ENCODE measurements at regions of chr11 and their contacts with region 1.

Region 1: GRCh38 chr11:75142714-75143419 is 8.0 kb upstream of the SLCO2B1 start:
- DNase-seq: no peak
- H3K4me3 ChIP-seq: no peak overlapping the region
- H3K27ac ChIP-seq: no peak overlapping the region
- H3K4me1 ChIP-seq: peaks cover 11% of the 10 kb centered on the region
- H3K27me3 ChIP-seq: no peaks in the 10 kb centered on the region
- CTCF ChIP-seq: no peak
- POLR2A ChIP-seq: no peak

Region 2: DNA sequence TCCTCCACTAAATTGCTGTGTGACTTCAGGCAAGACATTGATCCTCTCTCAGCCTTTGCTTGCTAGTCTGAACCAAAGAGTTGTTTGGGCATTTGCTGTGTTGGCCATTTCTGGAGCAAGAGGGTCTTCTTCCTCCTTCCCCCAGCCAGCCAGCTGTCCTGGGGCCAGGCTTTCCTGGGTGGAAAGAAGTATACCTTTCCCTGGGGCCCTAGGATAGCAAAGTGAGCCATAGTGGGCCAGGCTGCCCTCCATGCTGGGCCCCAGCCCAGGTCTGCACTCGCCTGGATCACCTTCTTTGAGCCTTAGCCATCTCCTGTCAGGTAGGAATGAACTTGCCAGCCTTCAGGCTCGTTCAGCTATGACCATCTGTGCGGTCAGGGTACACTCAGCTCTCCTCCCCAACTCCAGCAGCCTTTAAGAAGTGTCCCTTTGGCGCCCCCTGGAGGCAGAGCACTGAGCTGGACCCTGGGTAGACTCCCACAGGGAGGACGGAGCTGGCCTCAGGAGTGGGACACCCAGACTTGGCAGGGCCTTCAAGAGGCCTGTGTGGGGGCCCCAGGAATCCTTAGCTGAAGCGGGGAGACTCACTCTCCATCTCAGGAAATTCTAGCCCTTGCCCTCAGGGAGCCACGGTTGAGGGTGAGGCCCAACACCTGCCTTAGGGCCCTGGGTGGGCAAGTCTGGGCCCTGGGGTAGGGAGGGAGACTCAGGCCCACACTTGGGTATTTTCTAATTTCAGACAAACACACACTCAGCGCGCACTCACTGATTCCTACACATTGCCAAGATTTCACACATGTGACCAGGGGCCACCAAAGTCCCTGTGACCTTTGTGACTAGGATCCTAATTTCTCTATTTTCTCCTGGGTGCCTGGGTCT is 62.1 kb after region 1 on chr11:
- intact Hi-C with region 1: loop called (anchors 5 kb)
- DNase-seq: no peak
- H3K4me3 ChIP-seq: no peak overlapping the region
- H3K27ac ChIP-seq: no peak overlapping the region
- H3K4me1 ChIP-seq: no peaks in the 10 kb centered on the region
- H3K27me3 ChIP-seq: no peaks in the 10 kb centered on the region
- CTCF ChIP-seq: peak; percentile 47 to 81 (median 68)
- POLR2A ChIP-seq: no peak

Measured in vagina (tissue), 2 donors.